ENCODE measurements at regions of chr12 and their contacts with region 1.

Region 1: DNA sequence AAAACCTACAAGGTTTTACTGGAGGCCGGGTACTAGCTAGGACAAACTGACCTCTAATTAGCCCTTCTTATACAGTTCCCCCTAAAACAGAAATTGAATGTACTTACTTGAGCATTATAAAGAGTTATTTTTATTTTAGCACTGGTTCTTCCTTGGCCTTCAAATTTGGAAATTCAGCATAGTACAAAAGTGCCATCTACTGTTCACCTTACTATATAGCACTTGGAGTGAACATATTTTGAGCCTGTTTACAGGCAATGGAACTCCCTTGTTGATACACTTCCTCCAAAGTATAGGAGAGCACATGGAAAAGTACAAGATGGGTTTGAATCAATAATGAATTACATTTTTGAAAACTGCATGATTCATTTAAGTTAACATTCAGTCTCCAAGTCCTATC is 3.9 kb upstream of the POC1B start:
- DNase-seq: peak; percentile 42
- ATAC-seq: no peak
- H3K4me3 ChIP-seq: no peak overlapping the region
- H3K27ac ChIP-seq: no peak overlapping the region
- H3K4me1 ChIP-seq: peaks cover 15% of the 10 kb centered on the region
- H3K27me3 ChIP-seq: no peaks in the 10 kb centered on the region
- CTCF ChIP-seq: peak; percentile 74
- EP300 ChIP-seq: no peak
- POLR2A ChIP-seq: no peak
- RAD21 ChIP-seq: peak; percentile 68

Region 2: DNA sequence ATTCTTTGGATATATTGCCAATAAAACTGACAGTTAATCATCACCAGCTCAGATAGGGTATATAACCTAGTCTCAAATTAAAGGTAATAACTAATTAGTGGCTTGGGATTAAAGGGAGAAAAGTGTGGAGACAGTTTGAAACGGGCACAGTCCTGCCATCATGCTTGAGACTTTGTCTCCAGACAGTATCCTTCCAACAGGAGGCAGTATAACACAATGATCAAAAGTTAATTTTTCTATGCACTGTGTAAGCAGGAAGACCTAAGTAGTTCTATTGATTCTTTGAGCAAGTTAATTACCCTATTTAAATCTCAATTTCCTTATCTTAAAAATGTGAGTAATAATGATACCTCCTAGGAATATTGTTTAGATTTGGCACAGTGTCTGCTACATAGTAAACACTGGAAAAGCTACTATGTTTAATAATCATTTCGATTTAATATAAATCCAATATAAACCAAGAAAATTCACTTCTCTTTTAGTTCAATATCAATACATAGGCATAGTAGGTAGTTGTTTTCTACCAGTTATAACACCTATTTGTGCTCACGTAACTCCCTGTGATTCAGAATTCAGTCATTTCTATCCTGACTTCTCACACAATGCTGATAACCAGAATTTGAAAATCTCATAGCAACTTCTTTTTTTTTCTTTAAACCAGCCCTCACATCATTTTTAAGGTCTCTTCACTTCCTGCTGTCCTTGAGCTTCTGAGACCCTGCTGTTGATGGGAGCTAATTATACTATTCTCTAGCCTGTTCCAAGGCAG is 58.8 kb before region 1 on chr12:
- CTCF ChIA-PET with region 1: interaction called, 50 read pairs
- POLR2A ChIA-PET with region 1: interaction called, 3 read pairs
- in situ Hi-C with region 1: loop called (anchors 5 kb)
- intact Hi-C with region 1: loop called (anchors 1 kb)
- DNase-seq: peak; percentile 58
- ATAC-seq: peak; percentile 89
- H3K4me3 ChIP-seq: no peak overlapping the region
- H3K27ac ChIP-seq: no peak overlapping the region
- H3K4me1 ChIP-seq: no peaks in the 10 kb centered on the region
- H3K27me3 ChIP-seq: no peaks in the 10 kb centered on the region
- CTCF ChIP-seq: peak; percentile 76
- EP300 ChIP-seq: no peak
- POLR2A ChIP-seq: no peak
- RAD21 ChIP-seq: peak; percentile 78